Panc1 (cell line): ENCODE measurements at regions of chr9 and their contacts with region 1.

Region 1: DNA sequence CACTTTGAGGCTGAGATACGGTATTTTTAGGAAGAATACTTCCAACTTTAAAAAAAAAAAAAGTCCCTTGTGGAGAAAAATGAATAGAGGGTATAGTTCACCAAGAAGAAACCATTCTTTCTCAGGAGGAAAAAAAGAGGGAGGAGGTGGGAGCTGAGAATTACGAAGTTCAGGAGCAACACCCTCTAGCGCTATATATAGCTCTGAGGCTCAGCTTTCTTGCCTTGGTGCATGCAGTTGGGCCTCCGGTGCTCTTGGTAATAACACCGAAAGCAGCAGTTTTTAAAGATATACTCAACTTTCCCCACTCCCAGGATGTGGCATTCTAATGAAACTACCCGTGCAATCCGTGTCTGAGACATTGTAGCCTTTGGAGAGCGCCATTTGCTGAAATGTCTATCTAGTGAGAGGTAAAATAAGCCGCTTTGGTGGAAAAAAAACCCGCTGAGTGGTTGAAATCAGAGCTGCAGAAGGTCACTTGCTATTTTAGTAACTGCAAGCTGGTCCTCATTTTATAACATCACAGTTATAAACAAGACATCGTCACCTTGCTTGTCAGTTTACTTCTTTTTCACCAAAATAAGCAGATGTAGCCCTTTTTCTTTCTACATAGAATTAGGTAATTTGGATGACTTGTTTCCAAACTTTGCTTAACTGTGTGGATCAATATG is 156.4 kb downstream of the RORB start:
- DNase-seq: no peak
- ATAC-seq: no peak
- H3K4me3 ChIP-seq: no peak overlapping the region
- H3K27ac ChIP-seq: no peak overlapping the region
- H3K4me1 ChIP-seq: no peaks in the 10 kb centered on the region
- H3K27me3 ChIP-seq: no peaks in the 10 kb centered on the region
- CTCF ChIP-seq: no peak

Region 2: DNA sequence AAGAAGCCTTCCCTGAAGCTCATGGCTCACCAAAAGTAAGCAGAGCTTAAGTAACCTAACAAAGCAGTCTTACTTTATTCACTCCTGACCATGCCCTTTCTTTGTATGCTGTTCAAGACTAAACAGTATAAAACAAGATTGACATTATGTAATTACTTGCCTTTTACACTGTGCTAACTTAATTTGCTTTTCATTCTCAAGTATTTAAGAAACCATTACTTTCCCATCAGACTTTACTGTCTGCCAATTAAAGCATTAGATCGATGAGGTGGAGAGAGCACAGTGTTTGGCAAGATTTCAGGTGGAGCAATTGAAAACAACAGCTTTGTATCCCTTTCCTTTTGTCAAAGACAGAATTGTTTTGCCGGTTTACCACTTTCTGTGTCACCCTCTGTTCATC is 58.3 kb before region 1 on chr9:
- CTCF ChIA-PET with region 1: no interaction called
- POLR2A ChIA-PET with region 1: no interaction called
- in situ Hi-C with region 1: no loop called
- intact Hi-C with region 1: loop called (anchors 5 kb)
- DNase-seq: no peak
- ATAC-seq: no peak
- H3K4me3 ChIP-seq: no peak overlapping the region
- H3K27ac ChIP-seq: no peak overlapping the region
- H3K4me1 ChIP-seq: no peaks in the 10 kb centered on the region
- H3K27me3 ChIP-seq: no peaks in the 10 kb centered on the region
- CTCF ChIP-seq: no peak